ENCODE measurements at regions of chr11 and their contacts with region 1.

Region 1: DNA sequence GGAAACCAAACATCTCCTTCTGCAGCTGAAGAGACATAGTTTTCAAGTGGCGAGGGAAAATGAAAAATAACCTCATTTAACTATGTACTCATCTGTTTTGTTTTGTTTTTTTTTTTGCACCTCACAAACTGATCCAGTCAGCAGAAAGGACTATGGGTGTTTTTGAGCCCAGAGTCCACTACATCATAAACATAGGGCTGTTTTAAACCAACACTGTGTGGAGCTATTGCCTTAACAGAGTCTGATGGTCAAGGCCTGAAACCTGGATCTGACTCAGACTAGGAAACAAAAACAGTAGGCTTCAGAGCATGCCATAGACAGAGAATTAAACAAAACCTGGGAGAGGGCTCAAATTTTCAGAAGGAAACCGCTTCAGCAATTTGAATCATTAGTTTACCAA is 99.3 kb upstream of the FSHB start:
- DNase-seq: no peak
- ATAC-seq: peak in 3 of 4 donors; percentile 71 to 95 (median 93)
- H3K4me3 ChIP-seq: no peak overlapping the region
- H3K27ac ChIP-seq: no peak overlapping the region
- H3K4me1 ChIP-seq: no peaks in the 10 kb centered on the region
- H3K27me3 ChIP-seq: no peaks in the 10 kb centered on the region
- CTCF ChIP-seq: peak in 2 of 4 donors; percentile 22 to 31
- POLR2A ChIP-seq: no peak

Region 2: DNA sequence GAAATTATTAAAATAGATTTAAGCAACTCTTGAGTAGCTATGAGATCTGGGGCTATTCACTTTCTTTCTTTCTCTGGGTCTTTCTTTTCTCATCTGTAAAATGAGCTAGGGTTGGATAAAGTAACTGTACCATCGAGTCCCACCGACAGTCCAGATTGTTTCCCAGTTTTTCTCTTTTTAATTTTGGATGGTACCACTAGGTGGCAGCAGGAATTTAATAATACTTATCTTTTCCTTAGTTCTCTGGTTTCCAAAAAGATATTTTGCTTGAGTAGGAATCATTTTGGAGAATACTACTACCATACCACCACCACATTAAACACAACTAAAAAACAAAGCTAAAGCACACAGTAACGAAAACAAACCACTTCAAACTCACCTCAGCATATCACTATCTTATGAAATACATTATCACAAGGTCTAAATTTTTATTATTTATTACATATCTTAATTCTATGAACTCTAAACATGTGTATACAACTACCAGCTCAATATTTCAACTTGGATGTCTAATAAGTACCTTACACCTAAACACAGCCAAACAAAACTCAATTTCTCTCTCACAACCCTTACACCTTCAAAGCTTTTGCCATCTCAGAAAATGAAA is 698.7 kb before region 1 on chr11:
- intact Hi-C with region 1: loop called (anchors 10 kb)
- DNase-seq: no peak
- ATAC-seq: peak in 3 of 4 donors; percentile 22 to 54 (median 47)
- H3K4me3 ChIP-seq: no peak overlapping the region
- H3K27ac ChIP-seq: no peak overlapping the region
- H3K4me1 ChIP-seq: no peaks in the 10 kb centered on the region
- H3K27me3 ChIP-seq: no peaks in the 10 kb centered on the region
- CTCF ChIP-seq: peak; percentile 47 to 61 (median 54)
- POLR2A ChIP-seq: no peak